WTC11 (cell line): ENCODE measurements at regions of chr11 and their contacts with region 1.

Region 1: GRCh38 chr11:62394825-62395538 is 23.9 kb upstream of the SCGB1A1 start:
- DNase-seq: peak; percentile 78
- ATAC-seq: peak; percentile 71
- H3K4me3 Mint-ChIP-seq: peak overlapping the region; percentile 59
- H3K27ac Mint-ChIP-seq: no peak overlapping the region; the same call in 1 of the 2 replicates
- H3K4me1 Mint-ChIP-seq: peaks cover 22% of the 10 kb centered on the region
- H3K27me3 Mint-ChIP-seq: no peaks in the 10 kb centered on the region
- CTCF ChIP-seq: peak; percentile 61

Region 2: GRCh38 chr11:62340269-62340901 is 54.6 kb before region 1 on chr11:
- CTCF ChIA-PET with region 1: interaction called, 11 read pairs
- POLR2A ChIA-PET with region 1: no interaction called
- DNase-seq: peak; percentile 69
- ATAC-seq: peak; percentile 50
- H3K4me3 Mint-ChIP-seq: no peak overlapping the region
- H3K27ac Mint-ChIP-seq: no peak overlapping the region
- H3K4me1 Mint-ChIP-seq: peaks cover 26% of the 10 kb centered on the region
- H3K27me3 Mint-ChIP-seq: peaks cover 25% of the 10 kb centered on the region
- CTCF ChIP-seq: peak; percentile 43

Region 3: DNA sequence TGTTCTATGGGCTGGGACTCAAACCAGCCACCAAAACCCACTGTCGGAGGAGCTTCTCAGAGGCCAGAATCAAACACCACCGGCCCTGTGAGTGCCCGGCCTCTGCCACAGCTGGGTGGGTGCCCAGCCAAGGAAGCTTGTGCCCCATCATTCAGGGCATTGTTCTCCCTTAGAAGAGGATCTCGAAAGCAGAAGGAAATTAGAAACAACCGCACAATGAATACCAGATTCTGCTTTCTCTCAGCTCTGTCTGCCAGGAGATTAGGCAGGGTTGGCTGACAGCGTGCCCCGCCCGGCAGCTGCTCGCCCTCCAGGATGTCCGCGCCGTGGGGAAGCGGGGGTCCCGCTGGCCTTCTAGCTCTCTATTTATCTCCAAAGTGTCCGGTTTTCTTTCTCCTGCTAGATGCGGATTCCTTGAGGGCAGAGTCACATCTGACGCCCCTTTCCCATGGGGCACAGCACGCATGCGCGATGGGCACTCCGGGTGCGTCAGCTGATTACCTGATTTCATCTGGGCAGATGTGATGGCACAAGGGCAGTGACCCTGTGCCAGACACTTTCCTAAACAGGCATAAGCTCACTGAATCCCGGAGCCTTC is 49.4 kb after region 1 on chr11:
- CTCF ChIA-PET with region 1: interaction called, 16 read pairs
- POLR2A ChIA-PET with region 1: no interaction called
- DNase-seq: peak; percentile 41
- ATAC-seq: peak; percentile 65
- H3K4me3 Mint-ChIP-seq: peak overlapping the region; percentile 28
- H3K27ac Mint-ChIP-seq: peak overlapping the region; percentile 67; the same call in 1 of the 2 replicates
- H3K4me1 Mint-ChIP-seq: peaks cover 14% of the 10 kb centered on the region
- H3K27me3 Mint-ChIP-seq: no peaks in the 10 kb centered on the region
- CTCF ChIP-seq: no peak

Region 4: GRCh38 chr11:62497132-62497915 is 102.3 kb after region 1 on chr11:
- CTCF ChIA-PET with region 1: interaction called, 25 read pairs
- POLR2A ChIA-PET with region 1: no interaction called
- DNase-seq: peak; percentile 43
- ATAC-seq: peak; percentile 75
- H3K4me3 Mint-ChIP-seq: no peak overlapping the region
- H3K27ac Mint-ChIP-seq: peak overlapping the region; percentile 19; the same call in 1 of the 2 replicates
- H3K4me1 Mint-ChIP-seq: peaks cover 26% of the 10 kb centered on the region
- H3K27me3 Mint-ChIP-seq: peaks cover 11% of the 10 kb centered on the region
- CTCF ChIP-seq: no peak

Region 5: DNA sequence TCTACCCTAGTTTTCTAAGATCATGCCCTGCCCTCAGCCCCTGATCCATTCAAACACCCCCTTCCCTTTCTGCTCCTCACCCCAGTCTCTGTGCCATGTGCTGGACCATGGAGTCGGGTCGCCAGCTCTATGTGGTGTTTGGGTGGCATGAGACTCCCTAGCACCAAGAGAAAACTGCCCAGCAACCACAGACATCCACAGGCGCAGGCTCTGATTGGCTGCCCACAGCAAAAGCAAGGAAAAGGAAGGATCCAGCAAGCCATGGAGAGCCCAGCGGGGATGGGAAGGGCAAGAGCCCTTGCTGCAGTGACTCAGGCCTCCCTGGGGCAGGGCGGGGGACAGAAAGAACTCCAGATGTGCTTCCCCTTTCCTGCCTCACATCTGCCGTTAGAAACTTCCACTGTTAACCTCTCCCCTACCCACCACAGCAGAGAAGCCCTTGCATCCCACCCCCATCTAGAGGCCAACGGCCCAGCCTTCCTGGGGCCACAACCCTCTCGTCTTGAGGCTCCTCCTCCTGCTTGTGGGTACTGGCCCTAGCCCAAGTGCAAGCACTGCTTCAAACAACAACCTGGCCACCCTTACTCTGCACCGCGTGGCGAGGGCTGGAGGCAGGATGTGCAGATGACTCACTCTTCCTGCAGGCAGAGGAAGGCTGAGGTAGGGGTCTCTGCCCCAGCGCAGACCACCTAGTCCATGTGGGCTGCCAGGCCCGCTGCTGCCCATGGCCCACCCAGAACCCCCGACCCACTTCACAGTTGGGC is 161.3 kb after region 1 on chr11:
- CTCF ChIA-PET with region 1: interaction called, 74 read pairs
- POLR2A ChIA-PET with region 1: interaction called, 8 read pairs
- DNase-seq: peak; percentile 82
- ATAC-seq: peak; percentile 33
- H3K4me3 Mint-ChIP-seq: no peak overlapping the region; the same call in 1 of the 2 replicates
- H3K27ac Mint-ChIP-seq: peak overlapping the region; percentile 97
- H3K4me1 Mint-ChIP-seq: peaks cover 85% of the 10 kb centered on the region
- H3K27me3 Mint-ChIP-seq: no peaks in the 10 kb centered on the region; the same call in 1 of the 2 replicates
- CTCF ChIP-seq: no peak

Region 6: DNA sequence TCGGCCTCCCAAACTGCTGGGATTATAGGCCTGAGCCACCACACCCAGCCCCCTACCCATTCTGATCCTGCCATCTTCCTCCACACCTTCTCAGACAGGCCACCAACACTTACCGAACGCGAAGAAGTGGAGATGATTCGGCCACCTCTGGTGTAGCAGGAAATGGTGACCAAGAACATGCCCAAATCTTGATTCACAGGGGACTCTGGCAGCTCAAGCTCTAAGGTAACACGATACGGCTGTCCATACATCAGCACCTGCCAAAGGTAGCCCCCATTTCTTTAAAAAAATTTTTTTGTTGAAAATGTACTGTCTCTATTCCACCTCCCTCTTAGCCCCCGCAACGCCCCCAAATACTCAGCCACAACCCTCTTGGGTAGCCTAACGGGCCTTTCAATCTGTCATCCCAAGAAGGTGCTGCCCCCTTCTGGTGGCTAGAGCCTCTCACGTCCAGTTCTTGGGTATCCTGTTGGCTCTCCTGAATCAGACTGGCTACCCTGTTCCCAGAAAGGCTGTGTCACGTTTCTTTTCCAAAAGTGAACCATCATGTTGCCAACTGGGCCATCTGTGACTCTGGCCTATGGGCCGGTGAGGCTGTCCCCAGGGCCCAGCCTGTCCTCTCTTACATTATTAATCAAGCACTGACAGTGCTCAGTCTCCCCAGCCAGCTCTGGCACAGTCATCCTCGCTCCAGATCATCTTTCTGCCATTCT is 299.6 kb after region 1 on chr11:
- CTCF ChIA-PET with region 1: interaction called, 10 read pairs
- POLR2A ChIA-PET with region 1: no interaction called
- DNase-seq: peak; percentile 86
- ATAC-seq: peak; percentile 84
- H3K4me3 Mint-ChIP-seq: no peak overlapping the region
- H3K27ac Mint-ChIP-seq: peak overlapping the region; percentile 73
- H3K4me1 Mint-ChIP-seq: peaks cover 2% of the 10 kb centered on the region; the same call in 1 of the 2 replicates
- H3K27me3 Mint-ChIP-seq: no peaks in the 10 kb centered on the region
- CTCF ChIP-seq: peak; percentile 84